Heart left ventricle (tissue), 16 donors: ENCODE measurements at regions of chr12 and their contacts with region 1.

Region 1: GRCh38 chr12:21764065-21764464 is 10.4 kb downstream of the KCNJ8 start:
- DNase-seq: no peak
- ATAC-seq: no peak
- H3K4me3 ChIP-seq: no peak overlapping the region
- H3K27ac ChIP-seq: peak overlapping the region in 1 of 12 donors; percentile 29
- H3K4me1 ChIP-seq: peaks cover 0 to 18% (median under 1%) of the 10 kb centered on the region in 12 donors
- H3K27me3 ChIP-seq: no peaks in the 10 kb centered on the region
- CTCF ChIP-seq: no peak
- POLR2A ChIP-seq: no peak

Region 2: DNA sequence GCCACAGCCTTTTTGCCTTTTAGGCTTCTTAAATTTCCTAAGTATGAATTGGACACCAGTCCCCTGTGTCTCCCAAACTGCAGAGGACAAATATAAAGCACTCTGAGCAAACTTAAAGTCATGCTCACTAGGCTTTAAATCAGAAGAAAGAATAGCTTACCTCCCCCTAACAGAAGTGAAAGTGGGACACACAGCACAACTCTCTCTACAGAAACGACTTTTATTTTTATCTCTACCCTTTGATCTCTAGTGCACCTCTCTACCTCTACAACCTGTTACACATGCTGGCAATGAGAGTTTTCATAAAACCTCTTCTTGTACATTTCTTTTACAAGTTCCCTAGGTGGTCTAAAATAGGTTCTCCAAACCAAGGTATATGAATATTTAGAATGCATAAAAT is 371.7 kb before region 1 on chr12:
- intact Hi-C with region 1: no loop called
- DNase-seq: no peak
- ATAC-seq: no peak
- H3K4me3 ChIP-seq: no peak overlapping the region
- H3K27ac ChIP-seq: no peak overlapping the region
- H3K4me1 ChIP-seq: no peaks in the 10 kb centered on the region
- H3K27me3 ChIP-seq: peaks cover 0 to 13% (median 0%) of the 10 kb centered on the region in 9 donors
- CTCF ChIP-seq: no peak
- POLR2A ChIP-seq: no peak

Region 3: DNA sequence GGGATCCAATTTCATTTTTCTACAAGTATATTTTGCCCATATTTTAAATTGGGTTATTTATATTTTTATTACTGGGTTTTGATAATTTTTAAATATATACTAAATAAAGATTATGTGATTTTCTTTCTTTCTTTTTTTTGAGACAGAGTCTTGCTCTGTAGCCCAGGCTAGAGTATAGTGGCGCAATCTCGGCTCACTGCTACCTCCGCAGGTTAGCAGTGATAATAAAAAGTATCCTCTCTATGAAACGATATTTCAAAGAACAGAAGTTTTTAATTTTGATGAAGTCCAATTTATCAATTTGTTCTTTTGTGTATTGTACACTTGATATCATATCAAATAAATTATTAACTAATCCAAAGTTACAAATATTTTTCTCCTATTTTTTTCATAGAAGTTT is 59.2 kb before region 1 on chr12:
- intact Hi-C with region 1: loop called in 3 of 10 experiments (anchors 5 kb)
- DNase-seq: no peak
- ATAC-seq: no peak
- H3K4me3 ChIP-seq: no peak overlapping the region
- H3K27ac ChIP-seq: no peak overlapping the region
- H3K4me1 ChIP-seq: no peaks in the 10 kb centered on the region
- H3K27me3 ChIP-seq: no peaks in the 10 kb centered on the region
- CTCF ChIP-seq: no peak
- POLR2A ChIP-seq: no peak